Endothelial cell of umbilical vein (primary cell): ENCODE measurements at regions of chrX and their contacts with region 1.

Region 1: GRCh38 chrX:113400193-113400704 is 559.6 kb upstream of the AMOT start:
- DNase-seq: peak; percentile 73
- H3K4me3 ChIP-seq: peak overlapping the region in 1 of 3 experiments; percentile 5
- H3K27ac ChIP-seq: peak overlapping the region; percentile 93
- H3K4me1 ChIP-seq: peaks cover 27% of the 10 kb centered on the region
- H3K27me3 ChIP-seq: no peaks in the 10 kb centered on the region
- CTCF ChIP-seq: no peak
- POLR2A ChIP-seq: no peak

Region 2: GRCh38 chrX:113384628-113385027 is 15.6 kb before region 1 on chrX:
- CTCF ChIA-PET with region 1: interaction called, 3 read pairs
- POLR2A ChIA-PET with region 1: interaction called, 3 read pairs
- dilution Hi-C with region 1: no loop called
- intact Hi-C with region 1: loop called (anchors 1 kb)
- DNase-seq: peak; percentile 83
- H3K4me3 ChIP-seq: no peak overlapping the region
- H3K27ac ChIP-seq: peak overlapping the region; percentile 7
- H3K4me1 ChIP-seq: peaks cover 7% of the 10 kb centered on the region
- H3K27me3 ChIP-seq: no peaks in the 10 kb centered on the region
- CTCF ChIP-seq: no peak
- POLR2A ChIP-seq: no peak

Region 3: GRCh38 chrX:113512700-113513395 is 112.6 kb after region 1 on chrX:
- CTCF ChIA-PET with region 1: interaction called, 3 read pairs
- POLR2A ChIA-PET with region 1: interaction called, 3 read pairs
- dilution Hi-C with region 1: no loop called
- intact Hi-C with region 1: loop called (anchors 1 kb)
- DNase-seq: peak; percentile 66
- H3K4me3 ChIP-seq: no peak overlapping the region
- H3K27ac ChIP-seq: peak overlapping the region; percentile 80
- H3K4me1 ChIP-seq: peaks cover 35% of the 10 kb centered on the region
- H3K27me3 ChIP-seq: no peaks in the 10 kb centered on the region
- CTCF ChIP-seq: no peak
- POLR2A ChIP-seq: no peak